Mammary epithelial cell (primary cell): ENCODE measurements at regions of chr2 and their contacts with region 1.

Region 1: DNA sequence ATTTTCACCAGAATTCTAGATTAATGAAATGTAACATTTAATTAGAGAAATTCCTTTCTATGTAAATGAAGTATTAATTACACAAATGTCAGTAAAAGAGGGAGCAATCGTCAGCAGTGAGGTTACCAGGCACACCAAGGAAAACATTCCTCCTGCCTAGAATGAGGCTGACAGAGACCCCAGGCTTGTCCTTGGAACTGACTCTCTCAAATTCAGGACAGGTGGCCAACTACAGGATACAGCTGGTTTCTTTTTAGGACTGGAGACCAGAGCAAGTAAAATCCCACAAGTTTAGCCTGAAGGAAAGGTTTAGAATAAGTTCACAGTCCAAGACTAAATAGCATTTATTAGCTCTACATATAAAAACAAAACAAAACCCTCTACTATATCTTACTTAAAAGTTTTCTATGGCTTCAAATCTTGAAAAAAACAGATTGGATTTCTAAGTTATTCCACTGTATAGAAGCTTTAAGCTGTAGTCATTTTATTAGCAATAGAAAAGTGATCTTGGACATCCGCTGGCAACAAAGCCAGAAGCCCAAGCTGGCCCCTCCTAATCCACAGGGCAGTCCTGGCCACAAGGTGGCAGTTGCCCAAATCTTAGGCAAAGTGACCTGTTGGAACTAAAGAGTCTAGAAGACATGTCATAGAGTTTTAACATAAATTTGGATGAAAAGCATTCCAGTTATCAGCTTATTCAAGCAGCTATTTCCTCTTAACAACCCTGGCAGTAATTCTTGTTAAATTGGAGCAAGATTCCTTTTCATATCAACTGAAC is 81.0 kb downstream of the SP3 start:
- DNase-seq: peak; percentile 30
- H3K4me3 ChIP-seq: no peak overlapping the region
- H3K27ac ChIP-seq: no peak overlapping the region
- H3K4me1 ChIP-seq: no peaks in the 10 kb centered on the region
- H3K27me3 ChIP-seq: no peaks in the 10 kb centered on the region
- CTCF ChIP-seq: peak; percentile 52 to 68

Region 2: DNA sequence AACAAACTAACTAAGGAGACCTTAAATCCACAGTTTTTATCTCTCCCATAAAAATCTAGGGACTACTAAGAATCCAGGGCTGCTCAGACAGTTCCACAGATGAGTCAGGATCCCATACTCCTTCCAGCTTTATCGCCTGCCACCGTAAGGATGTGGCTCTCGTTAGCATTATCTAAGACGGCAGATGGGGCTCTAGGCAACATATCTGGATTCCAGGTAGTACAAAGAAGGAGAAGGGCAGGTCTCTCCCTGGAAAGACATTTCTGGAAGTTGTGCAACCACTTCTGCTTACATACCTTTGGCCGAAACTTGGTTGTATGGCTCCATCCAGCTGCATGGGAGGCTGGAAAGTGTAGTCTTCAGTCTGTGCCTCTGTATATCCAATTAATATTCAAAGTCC is 68.4 kb before region 1 on chr2:
- CTCF ChIA-PET with region 1: no interaction called
- dilution Hi-C with region 1: loop called (anchors 5 kb)
- in situ Hi-C with region 1: no loop called
- intact Hi-C with region 1: no loop called
- DNase-seq: peak; percentile 61
- H3K4me3 ChIP-seq: no peak overlapping the region
- H3K27ac ChIP-seq: no peak overlapping the region
- H3K4me1 ChIP-seq: no peaks in the 10 kb centered on the region
- H3K27me3 ChIP-seq: peaks cover 9% of the 10 kb centered on the region
- CTCF ChIP-seq: no peak

Region 3: DNA sequence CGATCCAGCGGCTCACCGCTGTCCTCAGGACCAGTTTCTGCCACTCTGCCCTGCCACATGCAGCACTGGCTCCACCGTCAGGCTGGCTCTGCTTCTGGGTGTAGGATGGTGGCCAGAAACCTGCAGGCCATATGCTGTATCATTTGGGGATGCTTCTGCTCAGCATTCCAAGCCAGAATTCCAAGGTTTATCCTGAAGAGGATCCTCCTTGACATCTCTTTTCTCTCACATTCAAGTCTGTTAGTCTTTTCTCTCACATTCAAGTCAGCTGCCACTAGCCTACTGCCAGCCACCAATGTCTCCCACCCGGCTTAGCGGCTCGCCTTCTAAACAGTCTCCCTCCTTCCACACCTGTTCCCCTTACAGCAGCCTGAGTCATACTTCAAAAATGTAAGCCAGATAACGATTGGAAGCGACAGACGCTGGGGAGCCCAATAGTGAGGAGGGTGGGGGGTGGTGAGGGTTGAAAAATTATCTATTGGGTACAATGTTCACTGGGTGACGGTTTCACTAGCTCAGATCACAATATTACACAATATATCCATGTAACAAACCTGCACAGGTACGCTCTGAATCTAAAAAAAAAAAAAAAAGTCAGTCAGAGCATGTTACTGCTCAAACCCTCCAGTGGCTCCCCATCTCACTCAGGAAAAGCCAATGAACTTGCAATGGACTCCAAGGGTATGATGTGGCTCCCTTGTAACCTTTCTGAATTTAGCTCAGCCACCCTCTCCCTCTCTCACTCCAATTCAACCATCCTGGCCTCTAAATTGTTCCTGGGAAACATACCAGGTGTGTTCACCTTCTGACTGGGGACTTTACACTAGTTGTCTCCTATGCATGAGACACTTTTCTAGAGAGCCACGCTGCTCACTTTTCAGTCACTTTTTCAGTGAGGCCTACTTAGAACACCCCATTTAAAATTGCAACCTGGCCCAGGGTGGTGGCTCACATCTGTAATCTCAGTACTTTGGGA is 119.8 kb after region 1 on chr2:
- CTCF ChIA-PET with region 1: no interaction called
- dilution Hi-C with region 1: no loop called
- in situ Hi-C with region 1: no loop called
- intact Hi-C with region 1: loop called (anchors 1 kb)
- DNase-seq: no peak
- H3K4me3 ChIP-seq: no peak overlapping the region
- H3K27ac ChIP-seq: no peak overlapping the region
- H3K4me1 ChIP-seq: peaks cover 7% of the 10 kb centered on the region
- H3K27me3 ChIP-seq: no peaks in the 10 kb centered on the region
- CTCF ChIP-seq: peak in 1 of 2 donors; percentile 42

Region 4: DNA sequence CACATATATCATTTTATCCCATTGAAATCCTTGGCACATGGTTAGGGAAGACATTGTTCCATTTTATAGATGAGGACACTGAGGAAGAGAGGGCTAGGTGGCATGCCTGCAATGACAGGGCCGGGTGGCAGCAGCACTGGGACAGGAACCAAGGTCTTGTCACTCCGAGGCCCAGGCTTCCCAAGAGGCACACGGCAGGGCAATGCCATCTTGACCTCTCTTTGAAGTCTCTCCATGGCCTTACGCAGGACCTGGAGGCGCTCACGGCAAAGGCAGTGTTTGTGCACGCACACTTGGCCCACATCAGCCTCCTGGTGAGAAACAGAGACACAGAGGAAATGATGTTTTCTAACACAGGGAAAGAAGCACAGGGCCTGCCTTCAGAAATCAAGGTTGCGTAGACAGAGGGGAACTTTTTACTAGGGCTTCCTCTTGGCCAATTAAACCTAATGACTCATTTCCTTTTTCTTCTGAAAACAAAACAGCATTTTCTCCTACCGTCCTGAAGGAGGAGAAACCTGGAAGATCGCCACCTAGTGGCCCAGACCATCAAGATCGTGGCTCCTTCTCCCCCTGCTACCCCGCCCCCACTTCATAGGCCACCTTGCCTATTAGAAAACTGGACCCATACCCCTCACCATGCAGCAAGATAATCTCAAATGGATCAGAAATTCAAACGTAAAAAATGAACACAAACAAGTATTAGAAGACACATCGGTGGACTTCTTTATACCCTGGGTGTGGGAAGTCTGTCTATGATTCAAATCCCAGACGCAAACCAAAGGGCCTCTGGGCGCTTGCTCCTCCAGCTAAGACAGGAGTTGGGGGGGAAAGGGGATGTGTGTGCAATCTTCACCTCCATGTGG is 155.6 kb after region 1 on chr2:
- CTCF ChIA-PET with region 1: no interaction called
- dilution Hi-C with region 1: no loop called
- in situ Hi-C with region 1: loop called in 1 of 2 experiments (anchors 25 kb)
- intact Hi-C with region 1: loop called (anchors 1 kb)
- DNase-seq: peak; percentile 90
- H3K4me3 ChIP-seq: peak overlapping the region in 1 of 3 experiments; percentile 14
- H3K27ac ChIP-seq: peak overlapping the region; percentile 69
- H3K4me1 ChIP-seq: peaks cover 17% of the 10 kb centered on the region
- H3K27me3 ChIP-seq: no peaks in the 10 kb centered on the region
- CTCF ChIP-seq: peak; percentile 80 to 93

Region 5: DNA sequence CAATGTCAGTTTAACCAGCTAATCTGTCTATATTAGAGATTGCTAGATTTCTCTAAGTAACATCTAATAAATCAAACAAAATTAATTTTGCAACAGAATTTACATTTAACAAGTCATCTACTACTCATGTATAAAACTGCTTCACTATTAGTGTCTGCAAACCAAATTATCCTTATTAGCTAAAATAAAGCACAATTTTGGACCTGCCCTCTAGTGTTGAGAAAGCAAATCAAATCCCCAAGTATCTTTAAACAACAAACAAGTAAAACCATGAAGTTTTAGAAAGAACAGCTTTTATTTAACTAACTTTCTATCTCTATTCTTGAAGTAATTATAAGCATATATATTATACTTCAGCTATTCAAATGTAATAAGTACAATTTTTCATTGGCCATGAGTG is 194.1 kb after region 1 on chr2:
- CTCF ChIA-PET with region 1: no interaction called
- dilution Hi-C with region 1: no loop called
- in situ Hi-C with region 1: no loop called
- intact Hi-C with region 1: loop called (anchors 1 kb)
- DNase-seq: no peak
- H3K4me3 ChIP-seq: no peak overlapping the region
- H3K27ac ChIP-seq: no peak overlapping the region
- H3K4me1 ChIP-seq: peaks cover 5% of the 10 kb centered on the region
- H3K27me3 ChIP-seq: no peaks in the 10 kb centered on the region
- CTCF ChIP-seq: peak; percentile 32 to 51